Dendritic cell treated with granulocyte-macrophage colony-stimulating factor and Interleukin-4, amounts not matched to agents 40 ng/mL and 50 ng/mL, for 4 days (primary cell): ENCODE measurements at regions of chr3 and their contacts with region 1.

Region 1: GRCh38 chr3:160449636-160450598 is at the start of gene TRIM59:
- H3K4me3 Mint-ChIP-seq: peak within 1 kb of the TSS; percentile 90
- H3K27ac Mint-ChIP-seq: peak within 1 kb of the TSS; percentile 88
- H3K4me1 Mint-ChIP-seq: peaks cover 20% of the 10 kb centered on the region
- H3K27me3 Mint-ChIP-seq: peaks cover 6% of the 10 kb centered on the region

Region 2: GRCh38 chr3:160133757-160134156 is 316.2 kb before region 1 on chr3:
- intact Hi-C with region 1: no loop called
- H3K4me3 Mint-ChIP-seq: no peak overlapping the region
- H3K27ac Mint-ChIP-seq: no peak overlapping the region
- H3K4me1 Mint-ChIP-seq: peaks cover 47% of the 10 kb centered on the region
- H3K27me3 Mint-ChIP-seq: peaks cover 15% of the 10 kb centered on the region

Region 3: GRCh38 chr3:160399125-160400029 is 50.5 kb before region 1 on chr3 and contains the starts of genes IFT80 and SMC4:
- intact Hi-C with region 1: loop called (anchors 5 kb)
- H3K4me3 Mint-ChIP-seq: peak within 1 kb of the TSS; percentile 81
- H3K27ac Mint-ChIP-seq: peak within 1 kb of the TSS; percentile 96
- H3K4me1 Mint-ChIP-seq: peaks cover 35% of the 10 kb centered on the region
- H3K27me3 Mint-ChIP-seq: no peaks in the 10 kb centered on the region

Region 4: GRCh38 chr3:160486459-160486869 is 36.5 kb after region 1 on chr3:
- intact Hi-C with region 1: loop called (anchors 5 kb)
- H3K4me3 Mint-ChIP-seq: no peak overlapping the region
- H3K27ac Mint-ChIP-seq: no peak overlapping the region
- H3K4me1 Mint-ChIP-seq: peaks cover 7% of the 10 kb centered on the region
- H3K27me3 Mint-ChIP-seq: no peaks in the 10 kb centered on the region

Region 5: DNA sequence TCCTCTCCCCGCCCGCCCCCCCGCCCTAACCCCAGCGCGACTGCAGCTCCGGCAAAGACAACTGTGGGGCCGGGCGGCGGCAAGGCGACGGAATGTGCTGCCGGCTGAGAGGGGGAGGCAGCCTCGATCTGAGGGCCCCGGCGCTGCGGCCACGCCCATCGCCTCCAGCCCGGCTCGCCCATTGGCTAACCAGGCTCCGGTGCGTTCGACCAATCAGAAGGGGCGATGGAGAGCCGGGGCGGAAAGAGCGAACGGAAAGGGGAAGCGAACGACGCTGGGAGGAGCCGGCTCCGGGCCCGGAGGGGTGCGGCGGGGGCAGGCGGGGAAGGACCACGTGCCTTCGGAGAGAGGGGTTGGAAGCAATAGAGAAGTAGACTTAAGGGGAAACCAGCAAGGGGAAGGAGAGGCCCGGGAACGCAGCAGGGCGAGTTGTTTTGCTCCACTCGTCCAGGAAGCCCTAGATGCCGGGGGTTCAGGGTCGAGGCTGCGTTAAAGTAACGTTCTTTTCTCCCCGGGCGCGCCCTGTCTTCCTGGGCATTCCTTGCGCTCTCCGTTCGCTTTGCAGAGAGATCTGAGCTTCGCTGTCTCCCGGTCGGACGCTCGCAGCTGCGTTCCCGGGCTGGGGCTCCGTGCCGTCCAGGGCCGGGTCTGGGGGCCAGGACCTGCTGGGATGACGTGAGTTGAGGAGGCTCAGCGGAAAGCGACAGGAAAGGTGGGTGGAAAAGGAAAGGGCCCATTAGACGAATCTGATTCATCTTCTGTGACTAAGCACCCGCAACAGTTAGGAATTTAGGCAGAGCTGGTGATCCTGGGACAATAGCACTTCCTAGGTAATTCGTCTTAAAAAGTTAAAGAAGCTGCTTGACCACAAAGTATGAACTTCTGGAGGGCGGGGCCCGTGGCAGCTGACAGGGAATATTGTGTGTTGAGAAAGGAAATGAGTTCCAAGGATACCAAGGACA is 115.8 kb after region 1 on chr3 and contains the start of gene KPNA4:
- intact Hi-C with region 1: loop called (anchors 5 kb)
- H3K4me3 Mint-ChIP-seq: peak within 1 kb of the TSS; percentile 95
- H3K27ac Mint-ChIP-seq: peak within 1 kb of the TSS; percentile 100
- H3K4me1 Mint-ChIP-seq: peaks cover 57% of the 10 kb centered on the region
- H3K27me3 Mint-ChIP-seq: no peaks in the 10 kb centered on the region